ENCODE measurements at regions of chr13 and their contacts with region 1.

Region 1: DNA sequence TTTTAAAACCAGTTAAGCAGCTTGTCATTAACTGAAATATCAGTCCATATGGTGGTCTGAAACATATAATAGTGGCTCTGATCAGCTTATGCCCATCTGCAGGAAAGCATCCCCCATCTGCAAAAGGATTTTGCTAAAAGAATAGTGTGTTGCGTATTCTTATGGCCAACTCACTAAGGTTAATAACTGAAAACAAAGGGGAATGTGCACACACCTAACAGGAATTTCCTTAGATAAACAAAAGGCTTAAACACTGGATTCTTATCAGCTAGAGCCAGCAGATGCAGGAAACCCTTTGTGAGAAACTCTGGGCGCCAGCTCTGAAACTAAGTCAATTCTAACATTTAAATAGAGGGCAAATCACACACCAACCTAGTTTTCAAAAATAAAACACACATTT is 22.1 kb downstream of the VPS36 start:
- DNase-seq: no peak
- H3K4me3 ChIP-seq: no peak overlapping the region
- H3K27ac ChIP-seq: no peak overlapping the region
- H3K4me1 ChIP-seq: peaks cover 0 to 10% (median 5%) of the 10 kb centered on the region in 4 donors
- H3K27me3 ChIP-seq: no peaks in the 10 kb centered on the region
- CTCF ChIP-seq: no peak
- EP300 ChIP-seq: no peak
- POLR2A ChIP-seq: no peak

Region 2: DNA sequence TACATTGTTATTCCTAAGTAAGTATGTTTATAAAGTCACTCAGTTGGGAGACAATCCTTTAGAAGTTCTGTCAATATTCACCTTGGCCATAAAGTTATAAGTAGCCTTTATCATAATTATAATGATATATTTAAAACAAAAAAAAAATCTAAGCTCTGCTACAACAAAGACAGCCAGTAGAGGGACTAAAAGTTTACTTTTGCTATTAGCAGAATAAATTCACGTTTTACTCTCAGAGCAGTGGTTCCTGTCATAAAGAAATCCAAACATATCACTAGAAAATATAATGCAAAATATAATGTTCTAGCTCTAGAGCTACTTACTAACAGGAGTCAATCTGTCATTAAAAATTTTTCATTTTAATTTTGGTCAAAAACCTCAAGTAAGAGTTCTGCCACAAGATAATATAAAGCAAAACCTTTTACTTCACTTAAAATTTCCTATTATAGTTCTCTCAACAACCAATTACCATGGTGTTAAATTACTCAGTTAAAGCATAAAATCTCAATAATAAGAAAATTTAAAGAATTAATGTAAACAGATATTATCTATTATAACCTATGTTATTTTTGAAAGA is 993.2 kb before region 1 on chr13:
- in situ Hi-C with region 1: loop called in 1 of 4 experiments (anchors 25 kb)
- intact Hi-C with region 1: no loop called
- DNase-seq: no peak
- H3K4me3 ChIP-seq: no peak overlapping the region
- H3K27ac ChIP-seq: no peak overlapping the region
- H3K4me1 ChIP-seq: peaks cover 0 to 5% (median 0%) of the 10 kb centered on the region in 4 donors
- H3K27me3 ChIP-seq: no peaks in the 10 kb centered on the region
- CTCF ChIP-seq: peak; percentile 44 to 52 (median 47)
- EP300 ChIP-seq: no peak
- POLR2A ChIP-seq: no peak

Region 3: DNA sequence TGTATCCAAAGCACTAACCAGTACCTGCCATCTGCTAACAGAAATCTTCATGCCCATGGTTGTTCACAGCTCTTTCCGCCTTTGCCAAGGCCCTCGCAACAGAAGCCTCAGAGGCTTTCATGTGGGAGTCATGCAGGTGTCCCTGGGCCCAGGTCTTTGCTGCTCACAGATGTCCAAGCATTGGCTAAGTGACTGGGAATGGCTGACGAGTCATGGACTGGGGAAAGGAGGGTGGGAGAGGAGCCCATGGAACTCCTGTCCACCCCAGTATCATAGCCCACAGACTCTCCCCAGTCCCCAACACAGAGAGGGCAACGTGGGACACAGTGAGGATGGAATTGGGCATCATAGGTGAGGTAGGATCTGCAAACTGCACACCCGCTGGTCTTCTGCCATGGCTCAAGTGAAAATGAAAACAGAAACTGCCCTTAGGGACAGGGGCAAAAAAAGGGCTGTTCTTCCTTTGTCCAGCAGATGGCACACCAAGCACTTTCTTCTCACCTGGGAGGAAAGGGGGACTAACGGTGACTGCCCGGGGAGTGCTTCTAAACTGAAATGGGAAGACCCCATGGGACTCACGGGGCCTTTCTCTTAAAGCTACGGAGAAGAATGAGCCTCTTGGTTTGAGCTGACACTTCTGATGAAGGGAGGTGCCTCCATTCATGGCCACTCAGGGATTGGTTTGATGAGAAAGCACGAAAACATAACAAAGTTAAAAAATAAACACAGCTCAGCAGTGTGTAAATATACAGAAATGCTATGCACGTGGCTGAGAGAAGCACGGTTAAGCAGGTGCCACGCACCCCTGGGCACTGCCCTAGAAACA is 613.3 kb before region 1 on chr13:
- in situ Hi-C with region 1: loop called in 1 of 4 experiments (anchors 25 kb)
- intact Hi-C with region 1: no loop called
- DNase-seq: peak; percentile 83
- H3K4me3 ChIP-seq: peak overlapping the region in 1 of 4 donors; percentile 12
- H3K27ac ChIP-seq: peak overlapping the region in 1 of 4 donors; percentile 46
- H3K4me1 ChIP-seq: peaks cover 5 to 13% (median 10%) of the 10 kb centered on the region in 4 donors
- H3K27me3 ChIP-seq: no peaks in the 10 kb centered on the region
- CTCF ChIP-seq: peak; percentile 80 to 85 (median 82)
- EP300 ChIP-seq: no peak
- POLR2A ChIP-seq: no peak

Region 4: DNA sequence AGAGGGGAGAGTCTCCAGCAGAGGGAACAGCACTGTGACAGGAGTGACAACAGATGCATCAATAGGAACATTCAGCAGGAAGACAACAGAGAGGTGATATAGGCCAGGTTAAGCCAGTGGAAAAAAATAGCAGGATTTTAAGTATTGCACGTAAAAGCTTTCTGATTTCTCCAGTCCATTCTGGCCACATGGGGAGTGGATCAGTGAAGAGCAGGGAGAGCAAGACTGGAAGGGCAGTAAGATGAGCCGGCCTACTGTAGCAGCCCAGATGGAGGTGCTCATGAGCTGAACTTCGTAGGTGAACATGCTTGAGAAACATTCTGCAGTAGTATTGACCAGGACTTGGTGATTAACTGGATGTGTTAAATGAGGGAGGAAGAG is 402.1 kb before region 1 on chr13:
- in situ Hi-C with region 1: loop called in 1 of 4 experiments (anchors 25 kb)
- intact Hi-C with region 1: no loop called
- DNase-seq: no peak
- H3K4me3 ChIP-seq: no peak overlapping the region
- H3K27ac ChIP-seq: no peak overlapping the region
- H3K4me1 ChIP-seq: peaks cover 0 to 8% (median 0%) of the 10 kb centered on the region in 4 donors
- H3K27me3 ChIP-seq: no peaks in the 10 kb centered on the region
- CTCF ChIP-seq: no peak
- EP300 ChIP-seq: no peak
- POLR2A ChIP-seq: no peak

Region 5: DNA sequence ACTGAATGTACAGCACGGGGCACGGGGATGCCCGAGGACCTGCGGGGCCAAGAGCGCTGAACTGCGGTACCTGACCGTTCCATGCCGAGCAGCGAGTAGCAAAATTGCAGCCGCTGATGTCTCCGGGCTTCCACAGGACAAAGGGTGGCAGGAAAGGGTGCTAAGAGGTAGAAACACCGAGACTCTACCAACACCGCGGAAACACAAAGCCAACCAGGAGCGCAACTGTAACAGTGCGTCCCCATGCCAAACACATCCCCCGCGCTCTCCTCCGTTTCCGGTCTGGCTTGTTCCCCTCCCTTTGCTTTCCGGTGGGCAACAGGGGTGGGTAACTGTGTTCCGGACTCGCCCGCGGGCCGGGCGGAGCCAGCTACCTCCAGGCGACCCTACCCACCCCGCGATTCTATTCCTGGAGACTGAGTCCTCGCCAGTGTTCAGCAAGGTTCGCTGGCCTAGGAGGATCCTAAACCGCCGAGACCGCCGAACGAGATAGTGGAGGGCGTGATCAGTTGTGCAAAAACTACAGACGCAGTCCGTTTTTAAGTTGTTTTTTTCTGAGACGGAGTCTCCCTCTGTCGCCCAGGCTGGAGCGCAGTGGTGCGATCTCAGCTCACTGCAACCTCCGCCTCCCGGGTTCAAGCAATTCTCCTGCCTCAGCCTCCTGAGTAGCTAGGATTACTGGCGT is 234.0 kb before region 1 on chr13:
- in situ Hi-C with region 1: loop called in 2 of 4 experiments (anchors 25 kb)
- intact Hi-C with region 1: no loop called
- DNase-seq: peak; percentile 90
- H3K4me3 ChIP-seq: peak overlapping the region; percentile 58 to 83 (median 73)
- H3K27ac ChIP-seq: peak overlapping the region; percentile 90 to 93 (median 92)
- H3K4me1 ChIP-seq: peaks cover 4 to 28% (median 17%) of the 10 kb centered on the region in 4 donors
- H3K27me3 ChIP-seq: no peaks in the 10 kb centered on the region
- CTCF ChIP-seq: peak in 1 of 5 experiments; percentile 18
- EP300 ChIP-seq: no peak
- POLR2A ChIP-seq: peak; percentile 74

Region 6: DNA sequence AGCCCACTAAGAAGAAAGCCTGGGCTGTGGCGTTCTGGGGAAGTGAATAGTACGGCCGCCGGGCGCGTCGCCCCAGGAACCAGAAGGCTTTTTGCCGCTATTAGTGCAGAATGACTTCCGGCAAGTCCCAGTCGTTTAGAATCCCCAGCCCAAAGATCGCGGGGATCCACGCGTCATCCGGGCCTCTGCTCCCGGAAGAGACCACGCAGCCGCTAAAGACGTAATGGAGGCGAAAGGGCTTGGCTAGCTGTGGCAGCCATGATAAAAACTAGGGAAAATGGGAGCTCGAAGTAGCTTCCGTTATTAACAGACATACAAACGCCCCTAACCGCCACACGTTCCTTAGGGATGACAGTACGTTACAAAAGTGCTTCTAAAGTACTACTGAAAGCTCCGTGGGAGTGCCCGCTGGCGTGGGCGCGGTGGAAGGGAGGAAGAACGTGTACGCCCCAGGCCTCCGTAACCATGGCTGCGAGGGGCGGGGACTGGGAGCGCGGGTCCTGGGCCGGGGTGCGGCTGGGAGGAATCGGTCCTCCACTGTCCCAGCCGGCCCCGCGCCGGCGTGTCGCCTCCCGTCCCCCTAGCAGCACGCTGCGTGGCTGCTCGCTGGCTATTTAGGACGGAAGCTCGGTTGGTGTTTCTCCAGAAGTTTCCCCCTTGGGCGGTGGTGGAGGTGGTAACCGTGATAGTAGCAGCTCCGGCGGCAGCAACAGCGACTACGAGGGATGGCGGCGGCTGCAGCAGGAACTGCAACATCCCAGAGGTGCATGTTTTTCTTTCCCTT is 224.1 kb after region 1 on chr13 and contains the start of gene SUGT1:
- in situ Hi-C with region 1: loop called in 1 of 4 experiments (anchors 25 kb)
- intact Hi-C with region 1: no loop called
- DNase-seq: peak; percentile 99
- H3K4me3 ChIP-seq: peak within 1 kb of the TSS; percentile 60 to 93 (median 78)
- H3K27ac ChIP-seq: peak within 1 kb of the TSS; percentile 95 to 99 (median 96)
- H3K4me1 ChIP-seq: peaks cover 7 to 47% (median 27%) of the 10 kb centered on the region in 4 donors
- H3K27me3 ChIP-seq: no peaks in the 10 kb centered on the region
- CTCF ChIP-seq: peak; percentile 56 to 90 (median 72)
- EP300 ChIP-seq: no peak
- POLR2A ChIP-seq: peak; percentile 87
- total RNA-seq, gene SUGT1: 18.7 to 38.9 (median 25.3) TPM